ENCODE measurements at regions of chr10 and their contacts with region 1.

Region 1: DNA sequence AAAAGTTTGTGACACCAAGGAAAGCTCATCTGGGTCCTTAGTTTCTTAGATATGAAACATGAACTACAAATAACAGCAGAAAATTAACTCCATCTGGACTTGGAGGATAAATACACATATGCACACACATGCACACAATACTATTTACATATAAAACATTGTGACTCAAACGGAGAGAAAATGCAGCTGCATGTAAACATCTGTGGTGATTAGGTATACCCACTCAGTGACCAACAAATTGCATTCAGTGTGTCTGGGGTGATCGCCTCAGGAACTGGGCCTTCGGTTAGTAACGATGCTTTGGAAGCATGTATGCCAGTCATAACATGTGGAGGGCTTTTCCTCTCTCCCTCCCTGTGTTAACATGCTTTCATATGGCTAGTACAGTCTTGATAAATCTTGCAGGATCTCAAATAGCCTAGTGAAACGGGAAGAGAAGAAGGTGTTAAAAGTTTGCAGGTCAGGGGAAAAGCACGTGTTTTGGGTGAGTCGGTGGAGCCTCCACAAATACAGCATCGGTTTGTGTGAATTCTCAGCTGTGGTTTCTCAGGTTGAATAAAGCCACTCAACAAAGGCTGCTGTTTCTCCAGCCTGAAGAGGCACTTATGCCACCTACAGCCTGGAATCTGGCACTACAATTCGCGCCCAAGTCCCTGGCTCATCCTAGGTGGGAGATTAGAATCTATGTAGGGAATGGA is 8.7 kb upstream of the GLRX3 start:
- DNase-seq: peak; percentile 73
- H3K4me3 Mint-ChIP-seq: no peak overlapping the region
- H3K27ac Mint-ChIP-seq: no peak overlapping the region
- H3K4me1 Mint-ChIP-seq: peaks cover 5% of the 10 kb centered on the region
- H3K27me3 Mint-ChIP-seq: peaks cover 19% of the 10 kb centered on the region

Region 2: GRCh38 chr10:129888784-129889616 is 238.5 kb before region 1 on chr10:
- CTCF ChIA-PET with region 1: interaction called, 15 read pairs
- POLR2A ChIA-PET with region 1: no interaction called
- intact Hi-C with region 1: loop called (anchors 5 kb)
- DNase-seq: peak; percentile 56
- H3K4me3 Mint-ChIP-seq: no peak overlapping the region
- H3K27ac Mint-ChIP-seq: no peak overlapping the region
- H3K4me1 Mint-ChIP-seq: no peaks in the 10 kb centered on the region
- H3K27me3 Mint-ChIP-seq: no peaks in the 10 kb centered on the region

Region 3: DNA sequence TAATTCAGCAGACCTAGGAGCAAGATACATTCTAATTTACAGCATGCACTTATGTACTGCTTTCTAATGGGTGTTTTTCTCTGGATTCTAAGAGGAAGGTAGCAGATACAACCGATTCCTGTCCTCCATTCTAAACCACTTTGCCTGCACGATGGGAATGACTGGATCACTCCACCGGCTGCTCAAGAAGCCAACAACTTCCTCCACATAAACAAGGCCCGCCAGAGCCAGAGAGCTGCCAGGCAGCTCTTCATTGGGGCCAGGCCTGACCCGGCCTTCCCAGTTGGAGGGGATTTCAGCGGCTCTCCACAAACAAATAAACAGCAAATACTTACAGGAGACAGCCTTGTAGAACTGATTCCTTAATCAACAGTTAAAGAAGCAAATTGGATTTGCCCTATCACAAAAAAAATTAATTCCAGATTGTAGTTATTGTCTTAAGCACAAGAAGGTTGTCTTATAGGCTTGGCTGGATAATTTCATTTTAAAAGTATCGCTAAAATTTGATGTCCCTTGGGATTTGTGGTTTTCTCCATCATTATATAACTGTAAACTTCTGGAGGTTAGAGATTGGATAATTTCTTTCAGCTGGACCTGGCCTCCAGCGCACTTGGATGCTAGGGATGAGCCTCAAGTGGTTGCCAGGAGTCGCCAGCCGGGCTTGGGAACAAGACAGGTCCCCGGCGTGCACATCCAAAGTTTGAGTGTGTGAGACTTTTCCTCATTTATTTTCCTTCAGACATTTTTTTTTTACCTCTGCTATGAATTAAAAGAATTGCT is 184.4 kb before region 1 on chr10:
- CTCF ChIA-PET with region 1: no interaction called
- POLR2A ChIA-PET with region 1: no interaction called
- intact Hi-C with region 1: no loop called
- DNase-seq: peak; percentile 1
- H3K4me3 Mint-ChIP-seq: no peak overlapping the region
- H3K27ac Mint-ChIP-seq: no peak overlapping the region
- H3K4me1 Mint-ChIP-seq: no peaks in the 10 kb centered on the region
- H3K27me3 Mint-ChIP-seq: peaks cover 11% of the 10 kb centered on the region

Region 4: DNA sequence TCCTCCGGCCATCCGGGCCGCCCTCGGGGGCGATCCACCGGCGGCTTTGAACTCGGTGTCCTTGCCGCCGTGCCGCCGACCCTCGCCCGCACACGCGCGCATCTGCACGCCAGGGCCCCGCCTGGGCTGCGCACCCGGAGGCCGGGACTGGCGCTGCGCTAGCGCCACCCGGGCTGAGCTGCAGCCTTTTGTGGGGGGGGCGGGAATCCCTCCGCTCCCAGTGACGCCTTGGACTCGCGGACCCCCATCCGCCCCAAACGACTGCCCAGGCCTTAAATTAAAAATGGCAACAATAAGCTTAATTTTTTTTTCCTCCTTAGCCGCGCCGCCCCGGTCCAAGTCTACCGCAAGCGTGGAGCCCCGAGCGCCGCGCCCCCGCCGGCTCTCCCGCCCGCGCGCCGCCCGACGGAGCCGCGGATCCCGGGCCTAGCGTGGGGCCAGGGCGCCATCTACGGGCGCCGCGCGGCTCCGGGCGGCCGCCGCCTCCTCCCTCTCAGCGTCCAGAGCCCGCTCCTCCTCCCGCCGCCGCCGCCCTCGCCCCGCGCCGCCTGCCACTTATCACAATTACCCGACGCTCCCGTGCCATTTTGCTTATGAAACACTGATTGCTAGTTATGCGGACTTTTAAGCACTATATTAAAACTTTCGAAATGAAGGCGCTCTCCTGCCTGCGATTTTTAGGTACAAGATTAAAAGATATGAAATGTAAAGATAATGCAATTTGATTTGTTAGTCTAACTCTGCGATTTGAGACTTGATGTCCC is 155.9 kb before region 1 on chr10:
- CTCF ChIA-PET with region 1: interaction called, 8 read pairs
- POLR2A ChIA-PET with region 1: no interaction called
- intact Hi-C with region 1: loop called (anchors 2 kb)
- DNase-seq: peak; percentile 68
- H3K4me3 Mint-ChIP-seq: peak overlapping the region; percentile 4
- H3K27ac Mint-ChIP-seq: peak overlapping the region; percentile 43
- H3K4me1 Mint-ChIP-seq: peaks cover 16% of the 10 kb centered on the region
- H3K27me3 Mint-ChIP-seq: peaks cover 69% of the 10 kb centered on the region

Measured in activated CD4-positive, alpha-beta memory T cell treated with anti-CD3 and anti-CD28 coated beads for 36 hours (primary cell).